ENCODE measurements at regions of chr6 and their contacts with region 1.

Region 1: GRCh38 chr6:70456735-70457134 is 43.4 kb downstream of the FAM135A start:
- DNase-seq: no peak
- H3K4me3 ChIP-seq: no peak overlapping the region
- H3K27ac ChIP-seq: no peak overlapping the region
- H3K4me1 ChIP-seq: no peaks in the 10 kb centered on the region
- CTCF ChIP-seq: no peak

Region 2: DNA sequence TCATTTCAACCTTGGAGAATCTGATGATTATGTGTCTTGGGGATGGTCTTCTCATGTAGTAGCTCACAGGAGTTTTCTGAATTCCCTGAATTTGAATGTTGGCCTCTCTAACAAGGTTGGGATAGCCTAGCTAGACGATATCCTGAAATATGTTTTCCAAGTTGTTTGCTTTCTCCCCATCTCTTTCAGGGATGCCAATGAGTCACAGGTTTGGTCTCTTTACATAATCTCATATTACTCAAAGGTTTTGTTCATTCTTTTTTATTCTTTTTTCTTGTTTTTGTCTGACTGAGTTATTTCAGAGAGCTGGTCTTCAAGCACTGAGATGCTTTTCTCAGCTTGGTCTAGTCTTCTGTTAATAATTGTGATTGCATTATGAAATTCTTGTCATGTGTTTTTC is 111.1 kb before region 1 on chr6:
- CTCF ChIA-PET with region 1: no interaction called
- POLR2A ChIA-PET with region 1: no interaction called
- intact Hi-C with region 1: no loop called
- DNase-seq: no peak
- H3K4me3 ChIP-seq: no peak overlapping the region
- H3K27ac ChIP-seq: no peak overlapping the region
- H3K4me1 ChIP-seq: no peaks in the 10 kb centered on the region
- CTCF ChIP-seq: no peak

Region 3: GRCh38 chr6:70563530-70563929 is 106.8 kb after region 1 on chr6:
- CTCF ChIA-PET with region 1: no interaction called
- POLR2A ChIA-PET with region 1: no interaction called
- intact Hi-C with region 1: no loop called
- DNase-seq: no peak
- H3K4me3 ChIP-seq: no peak overlapping the region
- H3K27ac ChIP-seq: no peak overlapping the region
- H3K4me1 ChIP-seq: peaks cover 5% of the 10 kb centered on the region
- CTCF ChIP-seq: no peak

Region 4: GRCh38 chr6:70599187-70599586 is 142.5 kb after region 1 on chr6:
- CTCF ChIA-PET with region 1: no interaction called
- POLR2A ChIA-PET with region 1: interaction called, 11 read pairs
- intact Hi-C with region 1: no loop called
- DNase-seq: no peak
- H3K4me3 ChIP-seq: no peak overlapping the region
- H3K27ac ChIP-seq: no peak overlapping the region
- H3K4me1 ChIP-seq: no peaks in the 10 kb centered on the region
- CTCF ChIP-seq: no peak